Activated CD4-positive, alpha-beta T cell treated with anti-CD3 and anti-CD28 coated beads, Interleukin-2, amount 10 ng/mL, durations not matched to agents 24 days and 14 days (primary cell): ENCODE measurements at regions of chrX and their contacts with region 1.

Region 1: GRCh38 chrX:51420610-51421009 is 75.8 kb downstream of the NUDT11 start:
- DNase-seq: peak; percentile 78
- H3K4me3 Mint-ChIP-seq: no peak overlapping the region
- H3K27ac Mint-ChIP-seq: no peak overlapping the region
- H3K4me1 Mint-ChIP-seq: peaks cover 2% of the 10 kb centered on the region
- H3K27me3 Mint-ChIP-seq: no peaks in the 10 kb centered on the region

Region 2: DNA sequence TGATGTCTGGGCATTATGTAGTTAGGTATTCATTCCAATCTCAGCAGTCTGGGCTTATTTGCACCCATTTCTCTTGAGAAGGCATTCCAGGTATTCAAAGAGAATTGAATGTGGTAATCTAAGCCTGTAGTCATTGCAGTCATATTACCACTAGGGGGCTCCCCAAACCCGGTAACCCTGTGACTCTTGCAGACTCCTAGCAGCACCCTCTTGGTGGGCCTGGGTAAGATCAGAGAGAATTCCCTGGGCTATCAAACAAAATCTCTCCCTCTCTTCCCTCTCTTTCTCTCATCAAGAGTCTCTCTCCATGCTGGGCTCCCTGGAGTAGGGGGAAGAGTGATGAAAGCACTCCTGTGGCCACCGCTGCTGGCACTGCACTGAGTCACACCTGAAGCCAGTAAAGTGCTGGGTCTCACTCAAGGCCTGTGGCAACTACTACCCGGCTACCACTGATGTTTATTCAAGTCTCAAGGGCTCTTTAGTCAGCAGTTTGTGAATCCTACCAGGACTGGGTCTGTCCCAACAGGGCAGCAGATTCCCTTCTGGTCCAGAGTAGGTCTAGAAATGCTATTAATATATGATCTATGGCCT is 275.7 kb before region 1 on chrX:
- intact Hi-C with region 1: loop called (anchors 5 kb)
- DNase-seq: peak; percentile 68
- H3K4me3 Mint-ChIP-seq: no peak overlapping the region
- H3K27ac Mint-ChIP-seq: no peak overlapping the region
- H3K4me1 Mint-ChIP-seq: no peaks in the 10 kb centered on the region
- H3K27me3 Mint-ChIP-seq: peaks cover 11% of the 10 kb centered on the region

Region 3: GRCh38 chrX:51281758-51282318 is 138.8 kb before region 1 on chrX:
- intact Hi-C with region 1: no loop called
- DNase-seq: no peak
- H3K4me3 Mint-ChIP-seq: no peak overlapping the region
- H3K27ac Mint-ChIP-seq: no peak overlapping the region
- H3K4me1 Mint-ChIP-seq: no peaks in the 10 kb centered on the region
- H3K27me3 Mint-ChIP-seq: no peaks in the 10 kb centered on the region

Region 4: GRCh38 chrX:51336584-51336983 is 84.0 kb before region 1 on chrX:
- intact Hi-C with region 1: loop called (anchors 1 kb)
- DNase-seq: peak; percentile 70
- H3K4me3 Mint-ChIP-seq: no peak overlapping the region
- H3K27ac Mint-ChIP-seq: no peak overlapping the region
- H3K4me1 Mint-ChIP-seq: peaks cover 4% of the 10 kb centered on the region
- H3K27me3 Mint-ChIP-seq: no peaks in the 10 kb centered on the region

Region 5: DNA sequence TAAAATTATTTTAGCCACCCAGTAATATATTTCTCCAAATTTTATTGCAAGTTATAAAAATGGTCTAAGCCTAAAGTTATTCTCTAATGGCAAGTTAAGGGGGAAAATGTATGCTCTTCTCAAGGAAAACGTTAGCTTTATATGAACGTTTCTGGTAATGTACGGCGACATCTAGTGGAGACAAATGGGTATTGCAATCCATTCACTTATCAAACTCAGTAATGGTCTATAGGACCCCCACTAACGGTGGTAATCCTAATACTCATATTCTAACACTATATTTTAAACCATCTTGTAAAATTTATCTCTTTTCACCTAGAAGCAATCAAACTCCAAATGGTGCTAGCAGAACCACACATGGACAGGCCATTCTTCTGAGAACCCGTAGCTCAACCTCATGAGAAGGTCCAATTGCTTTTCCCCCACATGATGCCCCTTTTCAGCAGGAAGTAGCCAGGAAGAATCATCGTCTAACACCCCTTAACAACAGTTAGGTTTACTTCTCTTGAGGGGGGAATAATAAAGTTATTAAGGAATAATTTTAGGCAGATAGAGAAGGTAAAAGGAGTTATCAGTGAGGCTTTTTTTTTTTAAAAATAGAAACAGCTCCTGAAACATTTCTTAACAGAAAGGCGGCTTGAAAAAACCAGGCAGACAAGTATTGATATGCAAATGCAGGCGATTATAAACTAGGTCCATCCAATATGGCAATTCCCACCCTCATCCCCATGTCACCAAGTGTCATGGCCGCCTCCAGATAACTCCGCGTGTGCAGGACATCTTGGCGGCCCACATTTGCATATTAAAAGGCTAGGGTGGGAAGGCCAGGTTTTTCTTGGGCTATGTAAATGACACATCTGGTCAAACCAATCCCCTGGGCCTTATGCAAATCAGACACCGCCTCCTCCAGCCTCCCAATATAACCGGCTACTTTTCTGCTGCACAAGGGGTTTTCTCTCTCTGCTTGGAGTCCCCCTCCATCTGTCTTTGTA is 40.7 kb after region 1 on chrX:
- intact Hi-C with region 1: no loop called
- DNase-seq: peak; percentile 65
- H3K4me3 Mint-ChIP-seq: no peak overlapping the region
- H3K27ac Mint-ChIP-seq: no peak overlapping the region
- H3K4me1 Mint-ChIP-seq: no peaks in the 10 kb centered on the region
- H3K27me3 Mint-ChIP-seq: no peaks in the 10 kb centered on the region